Calu3 (cell line): ENCODE measurements at regions of chr4 and their contacts with region 1.

Region 1: GRCh38 chr4:68498413-68499007 is 51.2 kb downstream of the TMPRSS11E start:
- DNase-seq: peak; percentile 65
- H3K4me3 Mint-ChIP-seq: no peak overlapping the region
- H3K27ac Mint-ChIP-seq: no peak overlapping the region
- H3K4me1 Mint-ChIP-seq: no peaks in the 10 kb centered on the region
- H3K27me3 Mint-ChIP-seq: no peaks in the 10 kb centered on the region
- CTCF ChIP-seq: no peak

Region 2: DNA sequence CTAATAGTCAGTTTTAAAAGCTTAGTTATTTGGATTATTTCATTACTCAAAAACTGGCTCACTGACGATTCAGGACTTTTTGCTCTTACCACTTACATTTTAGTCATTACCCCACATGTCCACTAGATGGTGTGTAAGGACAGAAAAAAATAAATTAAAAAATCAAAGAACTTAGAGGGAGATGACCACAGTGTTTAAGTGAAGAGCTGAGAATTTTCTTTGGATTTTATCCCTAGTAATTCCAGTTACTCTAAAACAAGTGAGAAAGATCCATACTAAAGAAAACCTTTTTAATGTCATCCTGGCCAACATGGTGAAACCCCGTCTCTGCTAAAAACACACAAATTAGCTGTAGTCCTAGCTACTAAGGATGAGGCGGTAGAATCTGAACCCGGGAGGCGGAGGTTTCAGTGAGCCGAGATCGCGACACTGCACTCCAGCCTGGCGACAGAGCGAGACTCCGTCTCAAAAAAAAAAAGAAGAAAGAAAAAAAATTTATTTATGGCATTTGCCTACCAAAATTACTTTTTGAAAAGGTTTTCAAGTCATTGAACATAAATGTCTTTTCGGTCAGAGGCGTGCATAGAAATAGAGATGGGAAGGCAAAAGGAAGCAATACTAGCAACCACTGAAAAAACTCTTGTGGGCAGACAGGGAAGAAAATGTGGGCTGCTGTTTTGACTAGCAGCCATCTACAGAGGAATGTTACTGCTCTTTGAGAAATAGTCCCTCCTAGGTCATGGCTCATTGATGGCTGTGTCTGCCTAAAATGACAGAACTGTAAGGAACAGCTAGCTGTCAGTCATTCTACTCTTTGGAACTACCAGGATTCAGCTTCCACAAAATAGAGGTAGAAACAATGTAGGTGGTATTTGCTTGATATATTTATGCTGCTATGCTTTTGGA is 226.4 kb before region 1 on chr4:
- CTCF ChIA-PET with region 1: no interaction called
- intact Hi-C with region 1: loop called (anchors 5 kb)
- DNase-seq: peak; percentile 4
- H3K4me3 Mint-ChIP-seq: no peak overlapping the region
- H3K27ac Mint-ChIP-seq: peak overlapping the region; percentile 26
- H3K4me1 Mint-ChIP-seq: peaks cover 16% of the 10 kb centered on the region
- H3K27me3 Mint-ChIP-seq: no peaks in the 10 kb centered on the region
- CTCF ChIP-seq: peak; percentile 22

Region 3: DNA sequence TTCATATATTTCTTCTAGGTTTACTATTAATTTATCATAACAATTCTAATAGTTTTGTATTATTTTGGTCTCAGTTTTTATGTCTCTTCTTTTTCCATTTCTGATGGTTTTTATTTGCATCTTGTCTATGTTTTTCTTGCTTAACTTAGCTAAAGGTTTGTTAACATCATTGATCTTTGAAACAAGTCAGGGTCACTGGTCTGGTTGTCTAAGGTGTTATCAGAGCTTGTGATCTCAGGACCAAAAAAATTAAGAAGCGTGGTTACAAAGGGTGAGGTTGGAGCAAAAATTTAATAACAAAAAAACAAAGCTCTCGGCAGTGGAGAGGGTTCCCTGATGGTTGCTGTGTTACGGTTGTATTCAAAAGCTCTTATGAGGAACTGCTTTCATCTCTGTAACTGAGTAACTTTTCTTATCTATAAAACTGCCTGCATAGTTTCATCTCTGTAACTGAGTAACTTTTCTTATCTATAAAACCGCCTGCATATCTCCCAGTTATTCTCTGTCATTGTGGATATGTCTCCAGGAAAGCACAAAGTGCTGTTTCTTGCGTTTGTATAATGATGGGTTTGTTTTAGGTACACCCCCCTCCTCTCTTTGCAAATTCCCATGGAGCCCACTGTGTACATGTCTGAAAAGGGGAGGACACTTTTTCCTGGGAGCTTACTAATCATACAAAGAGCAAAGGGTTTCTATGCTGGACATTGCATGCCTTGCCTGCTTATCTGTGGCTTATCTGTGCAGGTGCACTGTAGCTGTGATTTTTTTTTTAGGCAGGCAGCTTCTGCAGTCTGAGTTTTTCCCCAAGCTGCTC is 234.3 kb after region 1 on chr4:
- CTCF ChIA-PET with region 1: no interaction called
- intact Hi-C with region 1: loop called (anchors 1 kb)
- DNase-seq: peak; percentile 53
- H3K4me3 Mint-ChIP-seq: peak overlapping the region; percentile 6
- H3K27ac Mint-ChIP-seq: peak overlapping the region; percentile 61
- H3K4me1 Mint-ChIP-seq: peaks cover 45% of the 10 kb centered on the region
- H3K27me3 Mint-ChIP-seq: no peaks in the 10 kb centered on the region
- CTCF ChIP-seq: no peak

Region 4: GRCh38 chr4:68904786-68905185 is 406.3 kb after region 1 on chr4:
- CTCF ChIA-PET with region 1: no interaction called
- intact Hi-C with region 1: loop called (anchors 5 kb)
- DNase-seq: peak; percentile 41
- H3K4me3 Mint-ChIP-seq: peak overlapping the region; percentile 84
- H3K27ac Mint-ChIP-seq: peak overlapping the region; percentile 97
- H3K4me1 Mint-ChIP-seq: peaks cover 38% of the 10 kb centered on the region
- H3K27me3 Mint-ChIP-seq: no peaks in the 10 kb centered on the region
- CTCF ChIP-seq: peak; percentile 25

Region 5: GRCh38 chr4:69167300-69167699 is 668.8 kb after region 1 on chr4:
- CTCF ChIA-PET with region 1: interaction called, 3 read pairs
- intact Hi-C with region 1: loop called (anchors 2 kb)
- DNase-seq: no peak
- H3K4me3 Mint-ChIP-seq: no peak overlapping the region
- H3K27ac Mint-ChIP-seq: peak overlapping the region; percentile 51
- H3K4me1 Mint-ChIP-seq: peaks cover 18% of the 10 kb centered on the region
- H3K27me3 Mint-ChIP-seq: no peaks in the 10 kb centered on the region
- CTCF ChIP-seq: no peak